Activated CD8-positive, alpha-beta T cell treated with anti-CD3 and anti-CD28 coated beads for 36 hours (primary cell): ENCODE measurements at regions of chr4 and their contacts with region 1.

Region 1: DNA sequence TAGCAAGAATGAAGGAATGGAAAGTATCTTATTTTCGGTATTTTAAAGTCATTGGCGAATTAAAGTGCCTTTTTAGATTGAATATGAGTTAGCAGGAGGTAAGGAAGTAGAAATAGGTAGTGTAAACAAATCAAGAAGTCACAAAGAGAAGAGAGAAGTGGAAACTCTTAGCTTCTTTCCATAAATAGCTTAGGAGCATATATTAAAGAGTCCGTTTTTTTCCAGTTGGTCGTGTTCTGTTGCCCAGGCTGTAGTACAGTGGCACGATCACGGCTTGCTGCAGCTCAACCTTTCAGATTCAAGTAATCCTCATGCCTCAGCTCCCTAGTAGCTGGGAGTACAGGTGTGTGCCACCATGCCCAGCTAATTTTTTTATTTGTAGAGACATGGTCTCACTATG is 56.4 kb downstream of the UBE2K start:
- DNase-seq: no peak
- ATAC-seq: no peak
- H3K4me3 Mint-ChIP-seq: no peak overlapping the region
- H3K27ac Mint-ChIP-seq: no peak overlapping the region
- H3K4me1 Mint-ChIP-seq: peaks cover 8% of the 10 kb centered on the region
- H3K27me3 Mint-ChIP-seq: no peaks in the 10 kb centered on the region
- CTCF ChIP-seq: no peak

Region 2: DNA sequence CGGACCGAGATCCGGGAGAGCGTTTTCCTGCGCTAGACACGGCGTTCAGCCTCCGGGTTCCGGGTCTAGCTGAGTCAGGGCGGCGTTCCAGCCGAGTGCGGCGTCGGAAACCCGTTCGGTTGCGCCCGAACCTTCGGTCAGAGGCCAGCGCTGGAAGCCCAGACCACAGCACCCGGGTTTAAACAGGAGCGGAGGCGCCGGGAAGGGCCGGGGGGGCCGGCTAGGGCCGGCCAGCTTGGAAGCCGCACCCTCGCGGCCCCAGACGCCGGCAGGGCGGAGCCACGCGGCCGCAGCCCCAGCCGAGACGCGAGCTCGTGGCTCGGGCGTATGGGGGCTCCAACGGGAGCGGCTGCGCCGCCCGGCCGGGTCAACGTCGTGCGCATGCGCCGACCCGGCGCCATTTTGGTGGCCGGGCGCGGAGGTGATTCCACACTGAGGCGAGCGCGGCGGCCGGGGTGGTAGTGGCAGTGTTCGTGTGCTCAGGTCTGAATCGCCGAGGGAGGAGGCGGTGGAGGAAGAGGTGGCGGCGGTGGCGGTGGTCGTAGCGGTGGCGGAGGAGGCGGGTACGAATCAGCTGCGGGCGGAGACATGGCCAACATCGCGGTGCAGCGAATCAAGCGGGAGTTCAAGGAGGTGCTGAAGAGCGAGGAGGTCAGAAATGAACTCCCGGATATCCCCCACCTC is 56.4 kb before region 1 on chr4 and contains the start of gene UBE2K:
- CTCF ChIA-PET with region 1: no interaction called
- POLR2A ChIA-PET with region 1: no interaction called
- intact Hi-C with region 1: loop called (anchors 10 kb)
- DNase-seq: peak; percentile 87
- ATAC-seq: peak; percentile 84
- H3K4me3 Mint-ChIP-seq: peak within 1 kb of the TSS; percentile 92
- H3K27ac Mint-ChIP-seq: peak within 1 kb of the TSS; percentile 98
- H3K4me1 Mint-ChIP-seq: peaks cover 27% of the 10 kb centered on the region
- H3K27me3 Mint-ChIP-seq: no peaks in the 10 kb centered on the region
- CTCF ChIP-seq: no peak
- total RNA-seq, gene UBE2K: 69.5 to 77.1 TPM